ENCODE measurements at regions of chr7 and their contacts with region 1.

Region 1: DNA sequence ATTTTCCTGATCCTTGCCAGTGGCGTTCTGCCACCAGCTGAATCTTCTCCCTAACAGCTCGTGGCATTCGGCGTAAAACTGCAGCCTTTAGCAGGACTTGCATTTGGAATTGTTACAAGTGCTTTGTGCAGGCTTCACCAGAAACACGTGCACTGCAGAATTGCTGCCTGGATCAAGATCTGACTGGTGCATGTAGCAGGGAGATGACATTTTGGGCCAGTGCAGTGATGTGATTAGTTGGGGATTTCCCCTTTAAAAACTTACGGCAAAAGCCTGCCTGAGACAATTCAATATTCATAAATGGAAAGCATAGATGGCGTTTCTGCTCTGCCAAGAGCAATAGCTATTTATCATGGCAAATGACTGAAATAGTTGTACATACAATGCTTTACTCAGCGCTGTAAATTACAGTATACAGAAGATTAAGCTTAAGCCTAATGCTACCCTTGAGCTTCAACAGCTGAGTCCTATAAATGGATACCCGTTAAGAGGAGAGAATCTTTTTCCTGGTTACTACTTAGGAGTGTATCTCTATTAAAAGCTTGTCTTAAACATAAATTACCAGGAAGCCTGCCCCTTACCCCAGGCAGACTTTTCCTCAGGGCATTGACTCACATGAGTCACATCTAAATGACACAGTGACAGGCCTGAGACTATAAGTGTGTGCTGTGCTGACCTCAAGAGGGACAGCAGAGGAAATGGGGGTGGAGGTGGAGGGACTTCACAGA is 106.3 kb downstream of the ATXN7L1 start:
- DNase-seq: no peak
- ATAC-seq: no peak
- H3K4me3 Mint-ChIP-seq: no peak overlapping the region
- H3K27ac Mint-ChIP-seq: no peak overlapping the region
- H3K4me1 Mint-ChIP-seq: peaks cover 90% of the 10 kb centered on the region
- H3K27me3 Mint-ChIP-seq: no peaks in the 10 kb centered on the region
- CTCF ChIP-seq: no peak

Region 2: DNA sequence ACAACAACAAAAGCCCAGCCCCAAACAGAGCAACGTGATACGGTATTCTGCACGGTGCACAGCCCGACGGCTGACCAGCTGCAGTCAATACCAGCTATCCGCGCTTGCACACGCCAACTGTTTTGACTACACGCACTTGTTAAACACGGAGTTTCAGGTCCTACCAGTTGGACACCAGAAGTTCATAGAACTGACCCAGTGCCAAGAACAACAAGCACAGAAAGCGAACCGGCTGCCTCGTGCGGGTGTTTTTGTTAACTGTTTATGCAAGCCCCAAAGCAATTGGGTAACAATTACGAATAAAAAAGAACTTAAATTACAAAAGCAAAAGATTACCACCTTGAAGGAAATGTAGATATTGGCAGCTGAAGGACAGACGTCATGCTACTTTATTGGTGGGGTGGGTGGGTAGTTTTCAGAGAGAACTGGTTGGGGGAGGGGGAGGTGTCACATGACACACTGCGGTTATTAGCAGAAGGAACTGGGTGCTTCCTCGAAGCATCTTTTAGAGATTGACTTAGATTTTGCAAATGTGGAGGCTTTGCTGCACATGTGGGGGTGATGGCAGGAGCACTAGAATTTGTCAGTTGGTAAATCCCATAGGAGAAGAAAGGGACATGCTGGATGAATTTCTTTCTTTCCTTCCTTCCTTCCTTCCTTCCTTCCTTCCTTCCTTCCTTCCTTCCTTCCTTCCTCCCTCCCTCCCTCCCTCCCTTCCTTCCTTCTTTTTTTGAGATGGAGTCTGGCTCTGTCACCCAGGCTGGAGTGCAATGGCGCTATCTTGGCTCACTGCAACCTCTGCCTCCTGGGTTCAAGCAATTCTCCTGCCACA is 78.1 kb before region 1 on chr7:
- CTCF ChIA-PET with region 1: interaction called, 10 read pairs
- POLR2A ChIA-PET with region 1: no interaction called
- DNase-seq: peak; percentile 23
- ATAC-seq: no peak
- H3K4me3 Mint-ChIP-seq: peak overlapping the region; percentile 74
- H3K27ac Mint-ChIP-seq: peak overlapping the region; percentile 99
- H3K4me1 Mint-ChIP-seq: peaks cover 89% of the 10 kb centered on the region
- H3K27me3 Mint-ChIP-seq: no peaks in the 10 kb centered on the region
- CTCF ChIP-seq: no peak

Region 3: DNA sequence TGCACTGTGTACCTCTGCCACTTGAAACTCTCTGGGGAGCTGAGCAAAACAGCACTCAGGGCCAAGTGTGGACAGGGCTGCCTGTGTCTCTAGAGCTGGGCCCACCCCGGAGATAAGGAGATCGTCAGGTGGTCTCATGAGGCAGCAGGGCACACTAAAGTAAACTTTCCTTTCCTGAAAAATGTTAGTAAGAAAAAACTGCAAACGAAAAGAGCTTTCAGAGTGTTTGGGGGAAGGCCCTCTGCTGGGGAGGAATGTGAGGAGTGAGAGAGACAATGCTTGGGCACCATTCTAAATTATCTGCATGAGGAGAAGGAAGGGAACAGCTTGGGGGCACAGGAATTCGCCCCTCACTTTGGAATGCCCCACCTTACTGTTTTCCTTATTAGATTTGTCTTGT is 21.4 kb before region 1 on chr7:
- CTCF ChIA-PET with region 1: interaction called, 24 read pairs
- POLR2A ChIA-PET with region 1: no interaction called
- DNase-seq: no peak
- ATAC-seq: peak; percentile 70
- H3K4me3 Mint-ChIP-seq: no peak overlapping the region
- H3K27ac Mint-ChIP-seq: peak overlapping the region; percentile 80
- H3K4me1 Mint-ChIP-seq: peaks cover 47% of the 10 kb centered on the region
- H3K27me3 Mint-ChIP-seq: no peaks in the 10 kb centered on the region
- CTCF ChIP-seq: no peak

Region 4: GRCh38 chr7:105796365-105796764 is 26.3 kb after region 1 on chr7:
- CTCF ChIA-PET with region 1: interaction called, 20 read pairs
- POLR2A ChIA-PET with region 1: no interaction called
- DNase-seq: no peak
- ATAC-seq: no peak
- H3K4me3 Mint-ChIP-seq: no peak overlapping the region
- H3K27ac Mint-ChIP-seq: no peak overlapping the region
- H3K4me1 Mint-ChIP-seq: peaks cover 59% of the 10 kb centered on the region
- H3K27me3 Mint-ChIP-seq: no peaks in the 10 kb centered on the region
- CTCF ChIP-seq: no peak

Region 5: DNA sequence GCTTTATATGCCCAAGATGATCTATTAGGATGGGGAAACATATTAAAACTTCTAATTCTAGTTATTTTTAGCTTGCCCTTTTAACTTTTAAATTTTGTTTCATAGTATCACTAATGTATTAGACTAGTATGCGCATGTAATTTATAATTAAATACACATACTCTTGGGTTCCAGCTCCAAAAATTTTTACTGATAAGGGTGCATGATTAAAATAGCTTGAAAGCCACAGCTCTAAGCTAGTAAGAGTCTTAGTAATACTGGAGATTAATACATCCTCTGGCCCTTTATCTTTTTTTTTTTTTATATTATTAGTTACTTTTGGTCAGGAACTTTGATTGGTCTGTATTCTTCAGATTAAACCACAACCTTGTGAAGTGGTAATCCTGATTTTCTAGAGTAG is 52.7 kb after region 1 on chr7:
- CTCF ChIA-PET with region 1: interaction called, 14 read pairs
- POLR2A ChIA-PET with region 1: no interaction called
- DNase-seq: no peak
- ATAC-seq: no peak
- H3K4me3 Mint-ChIP-seq: no peak overlapping the region
- H3K27ac Mint-ChIP-seq: no peak overlapping the region
- H3K4me1 Mint-ChIP-seq: peaks cover 25% of the 10 kb centered on the region
- H3K27me3 Mint-ChIP-seq: no peaks in the 10 kb centered on the region
- CTCF ChIP-seq: no peak

Region 6: DNA sequence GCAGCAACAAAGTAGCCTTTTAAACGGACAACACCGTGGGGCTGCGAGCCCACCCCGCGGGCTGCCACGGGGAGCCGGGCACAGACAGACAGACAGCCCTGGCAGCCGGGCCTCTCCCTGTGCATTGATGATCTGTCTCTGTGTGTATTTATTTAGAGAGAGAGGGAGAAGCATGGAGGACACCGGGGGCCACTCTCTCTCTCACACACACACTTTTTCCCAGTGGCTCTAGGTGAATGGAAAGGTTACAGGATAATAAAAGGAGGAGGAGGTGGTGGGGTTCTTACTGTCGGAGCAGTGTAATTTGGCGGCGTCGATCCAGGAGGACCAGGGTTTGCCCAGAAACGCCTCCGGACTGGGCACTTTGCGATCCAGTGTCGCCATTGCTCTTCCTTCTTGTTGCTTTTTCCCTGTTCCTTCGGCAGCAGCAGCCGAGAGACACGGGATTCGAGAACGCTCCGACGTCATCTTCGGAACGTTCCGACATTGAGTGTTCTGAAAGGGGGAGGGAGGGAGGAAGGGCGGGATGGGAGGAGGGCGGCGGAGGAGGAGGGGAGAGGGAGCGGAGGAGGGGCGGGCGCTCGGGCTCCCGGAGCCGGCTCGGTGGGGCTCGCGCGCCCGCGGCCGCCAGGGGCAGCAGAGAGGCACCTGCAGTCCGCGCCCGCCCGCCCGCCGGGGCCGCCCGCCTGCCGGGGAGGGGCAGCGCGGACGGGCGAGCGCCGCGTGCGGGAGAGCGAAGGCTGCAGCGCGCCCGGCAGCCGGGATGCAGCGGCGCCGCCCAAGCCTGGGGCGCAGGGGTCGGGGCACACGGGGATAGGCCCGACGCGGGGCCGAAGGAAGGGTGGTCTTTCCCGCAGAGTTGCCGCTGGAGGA is 106.3 kb after region 1 on chr7 and contains the start of gene ATXN7L1:
- CTCF ChIA-PET with region 1: interaction called, 33 read pairs
- POLR2A ChIA-PET with region 1: no interaction called
- DNase-seq: peak; percentile 95
- ATAC-seq: peak; percentile 87
- H3K4me3 Mint-ChIP-seq: peak within 1 kb of the TSS; percentile 98
- H3K27ac Mint-ChIP-seq: peak within 1 kb of the TSS; percentile 99
- H3K4me1 Mint-ChIP-seq: peaks cover 60% of the 10 kb centered on the region
- H3K27me3 Mint-ChIP-seq: peaks cover 10% of the 10 kb centered on the region
- CTCF ChIP-seq: peak; percentile 52; the same call in 1 of the 2 replicates
- total RNA-seq, gene ATXN7L1: 36.0 to 38.5 TPM (median 37.7 TPM) in 3 replicates

Measured in WTC11 (cell line).